Heart left ventricle (tissue), 16 donors: ENCODE measurements at regions of chr15 and their contacts with region 1.

Region 1: DNA sequence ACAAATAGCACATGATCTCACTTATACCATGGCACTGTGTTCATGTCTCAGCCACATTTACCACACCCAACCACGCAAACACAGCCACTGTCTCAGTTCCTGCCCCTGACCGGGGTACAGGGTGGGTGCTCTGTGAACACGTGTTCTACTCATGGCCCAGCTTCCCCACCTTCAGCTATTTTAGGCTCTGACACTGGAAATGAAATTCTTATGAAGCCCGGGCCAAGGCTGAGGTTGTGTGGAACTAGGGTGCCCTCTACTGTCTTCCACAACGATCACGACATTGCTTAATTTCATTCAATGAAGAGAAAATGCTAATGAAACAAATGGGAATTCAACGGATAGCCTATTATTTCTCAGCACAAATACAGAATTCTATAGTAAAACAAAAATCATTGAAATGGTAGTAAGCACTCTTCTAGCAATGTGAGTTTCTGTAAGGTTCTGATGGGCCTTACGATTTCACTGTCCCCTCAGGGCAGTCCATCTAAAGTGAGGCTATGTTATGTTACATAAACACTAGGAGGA is 2.1 kb upstream of the GABRA5 start:
- DNase-seq: no peak
- ATAC-seq: peak; percentile 61 to 84 (median 78)
- H3K4me3 ChIP-seq: no peak overlapping the region
- H3K27ac ChIP-seq: no peak overlapping the region
- H3K4me1 ChIP-seq: peaks cover 0 to 21% (median 0%) of the 10 kb centered on the region in 12 donors
- H3K27me3 ChIP-seq: peaks cover 13 to 40% (median 27%) of the 10 kb centered on the region in 9 donors
- CTCF ChIP-seq: peak; percentile 26 to 67 (median 58)
- POLR2A ChIP-seq: no peak

Region 2: GRCh38 chr15:25693321-25694237 is 1171.1 kb before region 1 on chr15:
- intact Hi-C with region 1: loop called in 5 of 10 experiments (anchors 5 to 10 kb)
- DNase-seq: peak in 2 of 5 donors; percentile 31 to 43
- ATAC-seq: peak in 3 of 4 donors; percentile 51 to 67 (median 58)
- H3K4me3 ChIP-seq: no peak overlapping the region
- H3K27ac ChIP-seq: no peak overlapping the region
- H3K4me1 ChIP-seq: peaks cover 0 to 22% (median 0%) of the 10 kb centered on the region in 12 donors
- H3K27me3 ChIP-seq: no peaks in the 10 kb centered on the region
- CTCF ChIP-seq: peak; percentile 35 to 66 (median 59)
- POLR2A ChIP-seq: no peak

Region 3: GRCh38 chr15:25933456-25934158 is 931.1 kb before region 1 on chr15:
- intact Hi-C with region 1: loop called in 1 of 10 experiments (anchors 10 kb)
- DNase-seq: peak; percentile 44 to 80 (median 72)
- ATAC-seq: peak; percentile 88 to 98 (median 92)
- H3K4me3 ChIP-seq: peak overlapping the region in 8 of 12 donors; percentile 10 to 43 (median 28)
- H3K27ac ChIP-seq: no peak overlapping the region
- H3K4me1 ChIP-seq: peaks cover 0 to 7% (median 1%) of the 10 kb centered on the region in 12 donors
- H3K27me3 ChIP-seq: no peaks in the 10 kb centered on the region
- CTCF ChIP-seq: peak; percentile 44 to 75 (median 63)
- POLR2A ChIP-seq: no peak

Region 4: DNA sequence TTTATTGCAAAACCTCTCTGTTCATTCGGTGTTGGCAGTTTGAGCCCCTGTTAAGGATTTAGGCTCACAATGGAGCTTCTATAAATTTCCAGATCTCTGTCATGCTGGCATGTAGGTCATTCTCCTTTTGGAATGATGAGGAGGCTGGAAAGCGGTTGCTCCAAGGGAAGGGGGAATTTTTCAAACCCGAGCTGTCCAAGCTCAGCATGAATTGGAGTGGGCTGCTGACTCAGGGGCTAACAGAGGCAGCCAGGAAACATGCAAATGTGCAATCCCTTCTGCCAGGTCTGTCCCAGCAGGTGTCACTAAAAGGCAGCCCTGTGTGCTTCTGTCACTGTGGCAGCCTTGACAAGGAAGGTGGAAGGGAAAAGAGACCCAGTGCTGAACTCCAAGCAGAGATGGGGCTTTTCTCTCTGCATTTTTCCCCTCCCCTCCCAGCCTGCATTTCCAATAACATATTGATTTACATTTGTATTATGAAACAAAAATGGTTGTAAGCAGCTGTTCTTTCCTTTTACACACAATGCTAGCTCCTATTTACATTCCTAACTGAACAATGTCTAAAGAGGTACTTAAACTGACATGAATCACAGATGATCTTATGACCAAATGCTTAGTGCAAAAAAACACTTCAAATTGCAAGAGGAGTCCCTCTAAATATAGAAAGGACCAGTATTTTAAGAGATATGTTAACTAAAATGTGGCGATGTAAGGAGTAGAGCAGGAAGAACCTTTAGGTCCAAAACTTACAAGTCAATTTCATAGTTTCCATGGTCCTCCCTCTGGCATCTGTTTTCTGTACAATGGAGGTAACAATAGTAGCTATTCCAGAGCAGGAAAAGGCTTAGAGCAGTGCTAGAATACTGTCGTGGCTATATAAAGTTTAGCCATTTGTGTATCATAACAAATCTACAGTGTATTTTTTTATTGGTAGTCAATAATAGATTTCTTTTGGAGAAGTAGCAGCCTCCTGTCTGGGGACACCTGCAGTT is 917.1 kb before region 1 on chr15:
- intact Hi-C with region 1: loop called in 4 of 10 experiments (anchors 5 to 10 kb)
- DNase-seq: no peak
- ATAC-seq: no peak
- H3K4me3 ChIP-seq: no peak overlapping the region
- H3K27ac ChIP-seq: no peak overlapping the region
- H3K4me1 ChIP-seq: no peaks in the 10 kb centered on the region
- H3K27me3 ChIP-seq: peaks cover 0 to 6% (median 0%) of the 10 kb centered on the region in 9 donors
- CTCF ChIP-seq: no peak
- POLR2A ChIP-seq: no peak

Region 5: GRCh38 chr15:26179906-26180305 is 684.8 kb before region 1 on chr15:
- intact Hi-C with region 1: loop called in 6 of 10 experiments (anchors 2 to 10 kb)
- DNase-seq: no peak
- ATAC-seq: peak in 3 of 4 donors; percentile 61 to 79 (median 68)
- H3K4me3 ChIP-seq: no peak overlapping the region
- H3K27ac ChIP-seq: no peak overlapping the region
- H3K4me1 ChIP-seq: no peaks in the 10 kb centered on the region
- H3K27me3 ChIP-seq: no peaks in the 10 kb centered on the region
- CTCF ChIP-seq: peak in 9 of 12 donors; percentile 8 to 48 (median 34)
- POLR2A ChIP-seq: no peak

Region 6: DNA sequence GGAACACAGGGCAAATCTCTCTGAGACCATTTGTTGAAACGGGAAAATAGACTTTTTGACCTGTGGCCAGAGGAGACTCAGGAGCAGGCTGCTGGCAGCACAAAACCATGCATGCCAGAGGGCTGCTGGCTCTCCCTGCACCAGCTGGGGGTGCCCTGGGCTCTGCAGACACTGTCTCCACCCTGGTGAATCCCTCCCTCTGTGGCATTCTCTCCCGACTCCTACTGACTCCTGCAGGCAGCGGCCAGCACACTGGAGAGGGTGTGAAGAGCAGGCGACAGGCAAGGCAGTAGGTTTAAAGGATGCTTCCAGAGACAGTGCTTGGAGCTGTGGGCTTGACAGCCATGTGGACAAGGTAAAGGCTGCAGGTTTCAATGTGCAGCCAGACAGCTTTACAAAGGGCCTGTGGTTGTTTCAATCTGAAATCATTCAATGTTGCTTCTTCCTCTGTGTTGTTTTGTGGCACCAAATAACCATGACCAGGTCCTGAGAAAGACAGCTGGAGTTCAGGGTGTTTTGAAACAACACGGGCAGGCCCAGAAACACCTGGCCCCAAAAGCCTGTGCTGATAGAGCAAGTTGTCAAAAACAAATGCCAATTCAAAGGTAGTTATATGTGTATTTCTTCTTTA is 570.6 kb before region 1 on chr15:
- intact Hi-C with region 1: loop called in 6 of 10 experiments (anchors 2 to 10 kb)
- DNase-seq: peak in 4 of 5 donors; percentile 31 to 71 (median 54)
- ATAC-seq: peak; percentile 91 to 96 (median 94)
- H3K4me3 ChIP-seq: no peak overlapping the region
- H3K27ac ChIP-seq: no peak overlapping the region
- H3K4me1 ChIP-seq: no peaks in the 10 kb centered on the region
- H3K27me3 ChIP-seq: no peaks in the 10 kb centered on the region
- CTCF ChIP-seq: peak in 11 of 12 donors; percentile 13 to 57 (median 35)
- POLR2A ChIP-seq: no peak

Region 7: GRCh38 chr15:26901041-26901440 is 36.3 kb after region 1 on chr15:
- intact Hi-C with region 1: loop called in 1 of 10 experiments (anchors 5 kb)
- DNase-seq: no peak
- ATAC-seq: no peak
- H3K4me3 ChIP-seq: no peak overlapping the region
- H3K27ac ChIP-seq: no peak overlapping the region
- H3K4me1 ChIP-seq: no peaks in the 10 kb centered on the region
- H3K27me3 ChIP-seq: no peaks in the 10 kb centered on the region
- CTCF ChIP-seq: no peak
- POLR2A ChIP-seq: no peak